ENCODE measurements at regions of chr9 and their contacts with region 1.

Region 1: GRCh38 chr9:15135164-15135792 is 171.7 kb downstream of the TTC39B start:
- DNase-seq: peak; percentile 79
- ATAC-seq: peak; percentile 83
- H3K4me3 ChIP-seq: peak overlapping the region; percentile 61
- H3K27ac ChIP-seq: no peak overlapping the region
- H3K4me1 ChIP-seq: no peaks in the 10 kb centered on the region
- H3K27me3 ChIP-seq: no peaks in the 10 kb centered on the region
- CTCF ChIP-seq: peak; percentile 81

Region 2: DNA sequence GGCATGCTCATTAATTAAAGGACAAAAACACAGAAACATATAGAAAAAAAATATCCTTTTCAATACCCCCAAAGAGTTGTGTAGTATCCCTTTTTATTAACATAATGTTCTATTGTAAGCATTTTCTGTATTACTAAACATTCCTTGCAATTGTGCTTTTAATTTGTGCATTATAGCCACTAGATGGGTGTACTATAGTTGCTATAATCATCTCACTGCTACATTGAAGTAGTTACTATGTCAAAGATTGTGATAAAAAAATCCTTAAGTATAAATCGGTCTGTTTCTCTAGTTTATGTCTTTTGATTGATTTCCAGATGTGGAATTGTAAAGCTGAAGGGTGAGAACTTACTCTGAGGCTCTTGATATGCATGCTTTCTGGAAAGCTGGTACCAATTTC is 246.4 kb before region 1 on chr9:
- CTCF ChIA-PET with region 1: no interaction called
- POLR2A ChIA-PET with region 1: no interaction called
- intact Hi-C with region 1: loop called (anchors 2 kb)
- DNase-seq: no peak
- ATAC-seq: no peak
- H3K4me3 ChIP-seq: no peak overlapping the region
- H3K27ac ChIP-seq: no peak overlapping the region
- H3K4me1 ChIP-seq: no peaks in the 10 kb centered on the region
- H3K27me3 ChIP-seq: no peaks in the 10 kb centered on the region
- CTCF ChIP-seq: no peak

Region 3: DNA sequence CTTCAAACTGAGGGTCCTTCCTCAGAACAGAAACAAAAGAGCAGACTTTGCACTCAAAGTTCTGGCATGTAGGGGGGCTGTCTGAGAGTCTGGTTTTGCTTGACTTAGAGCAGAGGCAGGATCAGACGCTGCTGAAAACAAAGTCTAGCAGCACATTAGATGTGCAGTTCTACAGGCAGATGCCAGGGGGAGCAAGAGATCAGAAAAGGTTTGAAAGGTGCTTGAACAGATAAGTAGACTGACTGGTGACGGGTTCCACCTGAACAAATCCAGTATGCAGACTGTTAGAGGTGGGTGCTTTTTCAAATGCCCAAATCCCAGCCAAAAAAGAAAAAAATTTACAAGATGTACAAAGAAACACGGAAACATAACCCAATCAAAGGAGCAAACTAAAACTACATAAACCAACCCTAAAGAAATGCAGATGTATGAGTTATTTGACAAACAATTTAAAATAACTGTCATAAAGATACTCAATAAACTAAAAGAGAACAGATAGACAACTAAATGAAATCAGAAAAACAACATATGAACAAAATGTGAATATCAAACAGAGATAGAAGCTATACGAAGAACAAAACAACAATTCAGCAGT is 30.4 kb before region 1 on chr9:
- CTCF ChIA-PET with region 1: interaction called, 9 read pairs
- POLR2A ChIA-PET with region 1: no interaction called
- intact Hi-C with region 1: loop called (anchors 1 kb)
- DNase-seq: peak; percentile 56
- ATAC-seq: peak; percentile 53
- H3K4me3 ChIP-seq: no peak overlapping the region
- H3K27ac ChIP-seq: no peak overlapping the region
- H3K4me1 ChIP-seq: no peaks in the 10 kb centered on the region
- H3K27me3 ChIP-seq: no peaks in the 10 kb centered on the region; the same call in 1 of the 2 replicates
- CTCF ChIP-seq: peak; percentile 64

Measured in PC-3 (cell line).